Head of caudate nucleus (tissue), 42 donors: ENCODE measurements at regions of chr1 and their contacts with region 1.

Region 1: GRCh38 chr1:156383023-156383422 is 14.0 kb downstream of the RHBG start:
- DNase-seq: peak; percentile 70 to 94 (median 85)

Region 2: GRCh38 chr1:156295391-156295947 is 87.6 kb before region 1 on chr1 and contains the start of gene GLMP:
- intact Hi-C with region 1: no loop called
- DNase-seq: peak; percentile 57 to 91 (median 80)

Region 3: DNA sequence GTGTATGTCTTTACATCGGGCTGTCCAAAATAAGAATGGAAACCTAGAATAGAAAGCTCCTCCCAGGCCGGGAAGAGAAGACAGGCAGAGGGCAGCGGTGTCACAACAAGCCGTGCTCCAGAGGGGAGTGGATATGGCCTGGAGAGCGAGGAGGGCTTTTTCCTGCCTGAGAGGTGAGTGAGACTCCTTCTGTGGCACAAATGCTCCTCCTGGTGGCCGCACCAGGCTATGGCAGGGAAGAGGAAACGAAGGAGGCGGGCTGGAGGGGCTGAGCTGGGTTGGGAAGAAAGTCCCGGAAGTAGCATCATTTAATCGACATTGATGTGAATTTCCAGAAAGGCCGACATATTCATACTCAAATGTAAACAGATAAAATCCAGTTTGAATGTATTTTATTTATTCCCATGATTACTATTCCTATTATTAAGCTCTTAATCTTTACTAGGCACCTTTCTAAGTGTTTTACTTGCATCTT is 62.8 kb after region 1 on chr1:
- intact Hi-C with region 1: loop called (anchors 2 kb)
- DNase-seq: peak; percentile 60 to 95 (median 88)

Region 4: GRCh38 chr1:156601122-156601830 is 218.3 kb after region 1 on chr1 and contains the start of gene GPATCH4:
- intact Hi-C with region 1: loop called (anchors 10 kb)
- DNase-seq: peak; percentile 78 to 95 (median 88)